Lower leg skin (tissue), 4 donors: ENCODE measurements at regions of chr7 and their contacts with region 1.

Region 1: GRCh38 chr7:120720317-120720716 is 137.6 kb downstream of the TSPAN12 start:
- DNase-seq: no peak
- H3K4me3 ChIP-seq: no peak overlapping the region
- CTCF ChIP-seq: no peak
- POLR2A ChIP-seq: no peak

Region 2: DNA sequence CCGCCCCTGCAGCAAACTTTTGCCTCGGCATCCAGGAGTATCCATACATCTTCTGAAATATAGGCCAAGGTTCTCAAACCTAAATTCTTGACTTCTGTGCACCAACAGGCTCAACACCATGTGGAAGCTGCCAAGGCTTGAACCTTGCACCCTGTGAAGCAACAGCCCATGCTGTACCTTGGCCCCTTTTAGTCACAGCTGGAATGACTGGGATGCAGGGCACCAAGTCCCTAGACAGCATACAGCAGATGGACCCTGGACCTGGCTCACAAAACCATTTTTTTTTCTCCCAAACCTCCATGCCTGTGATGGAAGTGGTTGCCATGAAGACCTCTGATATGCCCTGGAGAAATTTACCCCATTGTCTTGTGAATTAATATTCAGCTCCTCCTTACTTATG is 681.2 kb before region 1 on chr7:
- intact Hi-C with region 1: loop called (anchors 5 kb)
- DNase-seq: no peak
- H3K4me3 ChIP-seq: no peak overlapping the region
- CTCF ChIP-seq: no peak
- POLR2A ChIP-seq: no peak